Activated naive CD4-positive, alpha-beta T cell treated with anti-CD3 and anti-CD28 coated beads for 36 hours (primary cell): ENCODE measurements at regions of chr4 and their contacts with region 1.

Region 1: GRCh38 chr4:73446336-73446938 is 10.4 kb downstream of the AFP start:
- DNase-seq: peak; percentile 4
- H3K4me3 Mint-ChIP-seq: no peak overlapping the region
- H3K27ac Mint-ChIP-seq: no peak overlapping the region
- H3K4me1 Mint-ChIP-seq: no peaks in the 10 kb centered on the region
- H3K27me3 Mint-ChIP-seq: peaks cover 11% of the 10 kb centered on the region

Region 2: GRCh38 chr4:73308286-73308685 is 138.2 kb before region 1 on chr4:
- CTCF ChIA-PET with region 1: interaction called, 24 read pairs
- intact Hi-C with region 1: loop called (anchors 1 kb)
- DNase-seq: no peak
- H3K4me3 Mint-ChIP-seq: no peak overlapping the region
- H3K27ac Mint-ChIP-seq: no peak overlapping the region
- H3K4me1 Mint-ChIP-seq: no peaks in the 10 kb centered on the region
- H3K27me3 Mint-ChIP-seq: no peaks in the 10 kb centered on the region

Region 3: GRCh38 chr4:73341454-73341853 is 105.0 kb before region 1 on chr4:
- CTCF ChIA-PET with region 1: interaction called, 20 read pairs
- intact Hi-C with region 1: loop called (anchors 1 kb)
- DNase-seq: peak; percentile 36
- H3K4me3 Mint-ChIP-seq: no peak overlapping the region
- H3K27ac Mint-ChIP-seq: no peak overlapping the region
- H3K4me1 Mint-ChIP-seq: no peaks in the 10 kb centered on the region
- H3K27me3 Mint-ChIP-seq: no peaks in the 10 kb centered on the region

Region 4: GRCh38 chr4:73406548-73406875 is 39.9 kb before region 1 on chr4:
- CTCF ChIA-PET with region 1: no interaction called
- intact Hi-C with region 1: no loop called
- DNase-seq: no peak
- H3K4me3 Mint-ChIP-seq: no peak overlapping the region
- H3K27ac Mint-ChIP-seq: no peak overlapping the region
- H3K4me1 Mint-ChIP-seq: no peaks in the 10 kb centered on the region
- H3K27me3 Mint-ChIP-seq: no peaks in the 10 kb centered on the region